ENCODE measurements at regions of chr16 and their contacts with region 1.

Region 1: DNA sequence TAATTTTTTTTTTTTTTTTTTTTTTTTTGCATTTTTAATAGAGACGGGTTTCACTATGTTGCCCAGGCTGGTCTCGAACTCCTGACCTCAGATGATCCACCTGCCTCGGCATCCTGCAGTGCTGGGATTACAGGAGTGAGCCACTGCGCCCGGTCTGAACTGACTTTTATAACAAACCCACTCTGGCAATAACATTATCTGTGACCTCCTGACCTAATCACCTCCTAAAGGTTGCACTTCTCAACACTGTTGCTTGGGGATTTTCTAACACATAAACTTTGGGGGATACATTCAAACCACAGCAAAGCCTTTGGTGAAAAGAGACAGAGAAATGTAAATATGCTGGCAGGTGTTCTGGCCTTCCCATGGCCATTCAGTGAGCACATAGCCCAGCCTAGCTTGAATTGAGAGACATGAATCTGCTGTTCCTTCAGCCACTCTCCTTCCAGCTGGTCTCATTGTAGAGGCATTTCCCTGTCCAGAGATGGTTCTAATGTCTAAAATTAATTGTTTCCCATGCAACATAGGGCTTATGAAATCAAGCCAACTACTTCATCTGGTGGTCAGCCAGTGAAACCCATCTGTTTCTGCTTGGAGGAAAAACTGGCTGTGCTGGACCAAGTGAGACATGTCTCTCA is 28.3 kb downstream of the LYRM1 start:
- DNase-seq: no peak
- ATAC-seq: peak in 3 of 4 donors; percentile 22 to 60 (median 35)
- H3K4me3 ChIP-seq: no peak overlapping the region
- H3K27ac ChIP-seq: peak overlapping the region in 6 of 12 donors; percentile 62 to 82 (median 78)
- H3K4me1 ChIP-seq: peaks cover 0 to 22% (median 8%) of the 10 kb centered on the region in 12 donors
- H3K27me3 ChIP-seq: no peaks in the 10 kb centered on the region
- CTCF ChIP-seq: no peak
- POLR2A ChIP-seq: no peak

Region 2: DNA sequence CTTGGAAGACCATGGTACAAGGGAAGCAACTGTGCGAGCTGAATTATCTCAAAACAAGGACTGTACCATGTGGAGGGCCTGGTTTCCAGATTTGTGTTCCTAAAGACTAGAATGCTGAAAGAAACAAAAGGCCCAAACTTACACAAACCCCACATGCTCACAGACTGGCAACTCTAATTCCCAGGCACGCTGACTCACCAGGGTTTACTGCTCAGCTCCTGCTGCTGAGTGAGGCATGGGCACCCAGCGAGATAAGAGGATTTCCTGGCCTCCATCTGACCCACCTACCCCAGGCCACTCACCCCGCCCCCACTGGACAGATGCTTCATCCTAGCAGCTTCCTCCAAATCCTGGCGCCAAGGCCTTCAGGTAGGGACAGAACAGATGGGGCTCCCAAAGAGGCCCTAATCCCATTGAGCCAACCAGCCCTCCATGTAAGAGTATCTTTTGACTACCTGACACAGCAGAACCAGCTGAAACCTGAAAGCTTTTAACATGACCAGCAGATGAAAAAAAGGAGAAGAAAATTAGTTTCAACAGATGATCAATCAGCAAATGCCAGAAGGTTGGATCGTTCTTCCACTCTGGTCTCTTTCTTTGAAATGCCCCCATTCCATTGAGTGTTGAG is 62.6 kb before region 1 on chr16:
- intact Hi-C with region 1: no loop called
- DNase-seq: peak in 4 of 5 donors; percentile 38 to 79 (median 65)
- ATAC-seq: peak in 3 of 4 donors; percentile 46 to 53 (median 47)
- H3K4me3 ChIP-seq: no peak overlapping the region
- H3K27ac ChIP-seq: peak overlapping the region; percentile 5 to 85 (median 51)
- H3K4me1 ChIP-seq: peaks cover 6 to 90% (median 65%) of the 10 kb centered on the region in 12 donors
- H3K27me3 ChIP-seq: no peaks in the 10 kb centered on the region
- CTCF ChIP-seq: no peak
- POLR2A ChIP-seq: no peak

Region 3: DNA sequence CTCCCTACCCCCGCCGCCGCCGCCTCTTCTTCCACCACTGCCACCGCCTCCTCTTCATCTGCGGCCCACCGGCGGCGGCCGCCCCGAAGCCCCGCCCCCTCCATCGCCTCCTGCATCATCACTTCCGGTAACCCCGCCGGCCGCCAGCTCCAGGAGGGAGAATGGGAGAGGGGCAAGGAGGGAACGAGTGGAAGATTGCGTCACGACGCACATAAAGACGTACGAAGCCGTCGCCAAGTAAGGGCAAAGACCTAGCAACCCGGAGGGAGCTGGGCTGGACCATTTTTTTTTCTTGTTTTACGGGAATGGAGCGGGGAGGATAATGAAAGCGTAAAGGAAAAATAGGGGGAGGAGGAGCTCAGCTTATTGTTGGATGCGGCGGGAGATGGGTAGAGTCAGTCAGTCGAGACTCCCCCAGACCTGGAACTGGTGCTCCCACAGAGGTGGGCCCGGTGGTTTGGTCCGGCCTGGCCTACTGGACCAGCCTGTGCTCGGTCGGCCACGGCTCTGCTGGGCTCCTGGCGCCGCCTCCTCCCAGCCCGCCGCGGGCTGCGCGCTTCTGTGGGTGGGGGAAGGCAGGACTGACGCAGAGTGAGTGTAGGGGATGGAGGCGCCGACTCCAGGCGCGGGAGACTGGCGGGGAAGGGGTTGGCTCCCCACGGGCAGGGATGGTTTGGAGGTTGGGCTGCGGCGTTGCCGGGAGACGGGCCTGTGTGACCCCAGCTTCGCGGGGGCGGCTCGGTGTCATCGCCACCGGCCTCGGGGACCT is 28.4 kb before region 1 on chr16 and contains the starts of genes DCUN1D3 and LYRM1:
- intact Hi-C with region 1: no loop called
- DNase-seq: peak; percentile 96 to 98 (median 97)
- ATAC-seq: peak; percentile 92 to 96 (median 93)
- H3K4me3 ChIP-seq: peak within 1 kb of the TSS; percentile 68 to 93 (median 80)
- H3K27ac ChIP-seq: peak within 1 kb of the TSS; percentile 95 to 99 (median 97)
- H3K4me1 ChIP-seq: peaks cover 17 to 70% (median 55%) of the 10 kb centered on the region in 12 donors
- H3K27me3 ChIP-seq: no peaks in the 10 kb centered on the region
- CTCF ChIP-seq: no peak
- POLR2A ChIP-seq: peak in 1 of 2 donors; percentile 93
- total RNA-seq, gene DCUN1D3: 8.3 to 21.4 (median 11.0) TPM
- total RNA-seq, gene LYRM1: 40.2 to 124 (median 54.6) TPM

Region 4: DNA sequence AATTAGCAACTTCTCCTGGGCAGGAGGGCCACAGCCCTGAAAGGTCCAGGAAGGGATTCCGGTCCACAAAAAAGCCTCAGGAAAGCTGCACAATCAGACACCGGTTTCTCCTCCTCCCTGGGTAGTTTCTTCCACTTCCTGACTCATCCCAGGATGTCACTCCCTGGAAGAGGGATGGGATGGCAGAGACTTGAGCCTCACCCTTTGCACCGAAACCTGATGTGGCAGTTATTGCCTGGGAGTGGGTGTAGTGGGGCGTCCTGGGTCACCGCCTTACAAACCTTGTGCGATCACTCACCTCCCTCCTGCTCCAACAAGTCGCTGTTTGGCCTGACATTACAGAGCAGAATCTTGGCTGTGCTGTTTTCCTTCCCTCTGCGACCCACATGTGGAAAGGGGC is 42.5 kb after region 1 on chr16:
- intact Hi-C with region 1: no loop called
- DNase-seq: no peak
- ATAC-seq: no peak
- H3K4me3 ChIP-seq: no peak overlapping the region
- H3K27ac ChIP-seq: no peak overlapping the region
- H3K4me1 ChIP-seq: no peaks in the 10 kb centered on the region
- H3K27me3 ChIP-seq: no peaks in the 10 kb centered on the region
- CTCF ChIP-seq: no peak
- POLR2A ChIP-seq: no peak

Region 5: GRCh38 chr16:20987049-20987448 is 58.2 kb after region 1 on chr16:
- intact Hi-C with region 1: loop called in 1 of 10 experiments (anchors 10 kb)
- DNase-seq: no peak
- ATAC-seq: no peak
- H3K4me3 ChIP-seq: no peak overlapping the region
- H3K27ac ChIP-seq: no peak overlapping the region
- H3K4me1 ChIP-seq: no peaks in the 10 kb centered on the region
- H3K27me3 ChIP-seq: no peaks in the 10 kb centered on the region
- CTCF ChIP-seq: no peak
- POLR2A ChIP-seq: no peak

Measured in heart left ventricle (tissue), 16 donors.